ENCODE measurements at regions of chr5 and their contacts with region 1.

Region 1: GRCh38 chr5:143106174-143106573 is 297.3 kb downstream of the NR3C1 start:
- DNase-seq: peak; percentile 64
- H3K27ac ChIP-seq: 0 out of 2 replicates have a peak overlapping the region, but pooled peaks have one; percentile 2
- CTCF ChIP-seq: peak; percentile 48

Region 2: GRCh38 chr5:143086908-143087637 is 19.1 kb before region 1 on chr5:
- CTCF ChIA-PET with region 1: no interaction called
- POLR2A ChIA-PET with region 1: no interaction called
- DNase-seq: peak; percentile 85
- H3K27ac ChIP-seq: peak overlapping the region; percentile 68
- CTCF ChIP-seq: no peak

Region 3: DNA sequence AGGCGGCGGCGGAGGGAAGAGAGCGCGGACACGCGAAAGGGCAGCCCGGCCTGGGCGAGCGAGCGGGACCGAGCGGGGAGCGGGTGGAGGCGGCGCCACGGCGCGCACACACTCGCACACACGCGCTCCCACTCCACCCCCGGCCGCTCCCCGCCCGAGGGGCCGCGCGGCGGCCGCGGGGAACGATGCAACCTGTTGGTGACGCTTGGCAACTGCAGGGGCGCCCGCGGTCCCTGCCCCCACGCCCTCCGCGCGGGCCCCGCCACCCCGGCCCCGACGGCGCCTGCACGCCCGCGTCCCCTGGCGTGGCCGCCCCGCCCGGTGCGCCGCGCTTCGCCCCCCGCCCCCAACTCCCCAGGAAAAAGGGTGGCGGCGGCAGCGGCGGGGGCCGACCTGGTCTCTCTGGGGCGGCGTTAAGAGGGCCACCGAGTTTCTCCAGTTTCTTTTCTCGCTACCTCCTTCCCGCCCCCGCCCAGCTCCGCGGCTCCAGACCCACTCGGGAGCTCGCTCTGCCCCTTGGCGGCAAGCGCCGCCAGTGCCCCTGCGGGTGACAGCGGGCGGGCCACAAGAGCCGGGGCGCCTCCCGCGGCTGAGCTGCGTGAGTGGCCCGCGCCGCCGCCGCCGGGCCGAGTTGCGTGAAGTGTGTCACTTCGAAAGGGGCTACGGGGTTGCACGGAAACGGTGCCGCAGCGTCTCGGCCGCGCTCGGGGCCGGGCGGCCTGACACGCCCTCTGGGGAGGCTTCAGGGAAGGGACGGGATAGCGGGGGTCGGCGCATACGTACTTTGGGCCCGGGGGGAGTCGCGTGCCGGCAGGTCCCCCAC is 297.6 kb after region 1 on chr5 and contains the start of gene NR3C1:
- CTCF ChIA-PET with region 1: interaction called, 14 read pairs
- POLR2A ChIA-PET with region 1: no interaction called
- DNase-seq: peak; percentile 80
- H3K27ac ChIP-seq: peak within 1 kb of the TSS; percentile 100
- CTCF ChIP-seq: peak; percentile 92